HepG2 (cell line): ENCODE measurements at regions of chr20 and their contacts with region 1.

Region 1: DNA sequence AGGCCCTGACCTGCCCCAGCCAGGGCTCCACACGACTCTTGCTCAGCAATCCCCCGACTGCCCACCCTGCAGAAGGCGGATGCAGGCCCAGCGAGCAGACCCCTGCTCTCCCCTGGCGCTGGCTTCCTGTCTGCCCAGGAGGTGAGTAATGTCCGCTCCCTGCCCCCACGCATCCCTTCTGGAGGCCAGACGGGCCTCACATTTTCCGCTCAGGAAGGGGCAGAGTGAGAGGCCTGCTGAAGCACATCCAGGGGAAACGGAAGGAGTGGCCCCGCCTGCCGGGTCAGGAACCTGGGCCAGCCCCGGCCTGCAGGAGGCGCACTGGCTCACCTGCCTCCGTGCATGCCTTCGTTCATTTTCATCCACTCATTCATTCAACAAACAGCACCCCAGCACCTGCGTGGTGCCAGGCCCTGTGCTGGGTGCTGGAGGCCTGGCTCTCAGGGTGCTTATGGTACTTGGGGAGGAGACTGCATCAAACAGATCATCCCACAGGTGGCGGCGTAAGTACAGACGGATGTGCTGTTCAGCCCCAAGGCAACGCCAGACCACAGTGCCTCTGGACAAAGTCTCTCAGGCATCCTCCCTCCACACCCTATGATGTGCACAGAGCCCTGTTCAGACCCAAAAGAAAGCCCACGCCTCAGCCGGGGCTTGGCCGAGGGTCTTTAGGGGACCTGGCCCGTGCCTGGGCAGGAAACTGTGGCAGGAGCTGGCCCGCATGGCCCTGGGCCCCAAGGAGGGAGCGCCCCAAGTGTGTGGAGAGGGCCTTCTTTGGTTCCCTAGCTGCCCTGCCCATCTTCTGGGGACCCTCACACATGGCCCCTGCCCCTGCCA is 112.1 kb downstream of the ASXL1 start:
- DNase-seq: peak; percentile 71
- ATAC-seq: peak; percentile 14
- H3K4me3 ChIP-seq: no peak overlapping the region
- H3K27ac ChIP-seq: peak overlapping the region; percentile 7
- H3K4me1 ChIP-seq: peaks cover 87% of the 10 kb centered on the region
- H3K27me3 ChIP-seq: no peaks in the 10 kb centered on the region
- CTCF ChIP-seq: peak; percentile 72
- EP300 ChIP-seq: no peak
- POLR2A ChIP-seq: peak; percentile 35 to 38; a peak in 3 of 4 replicates
- RAD21 ChIP-seq: peak; percentile 92

Region 2: GRCh38 chr20:32411955-32412706 is 58.1 kb before region 1 on chr20:
- CTCF ChIA-PET with region 1: no interaction called
- POLR2A ChIA-PET with region 1: no interaction called
- in situ Hi-C with region 1: no loop called
- intact Hi-C with region 1: no loop called
- DNase-seq: no peak
- ATAC-seq: no peak
- H3K4me3 ChIP-seq: no peak overlapping the region
- H3K27ac ChIP-seq: no peak overlapping the region
- H3K4me1 ChIP-seq: no peaks in the 10 kb centered on the region
- H3K27me3 ChIP-seq: no peaks in the 10 kb centered on the region
- CTCF ChIP-seq: no peak
- EP300 ChIP-seq: no peak
- POLR2A ChIP-seq: no peak
- RAD21 ChIP-seq: no peak

Region 3: GRCh38 chr20:32427996-32428395 is 42.2 kb before region 1 on chr20:
- CTCF ChIA-PET with region 1: no interaction called
- POLR2A ChIA-PET with region 1: no interaction called
- in situ Hi-C with region 1: no loop called
- intact Hi-C with region 1: no loop called
- DNase-seq: no peak
- ATAC-seq: no peak
- H3K4me3 ChIP-seq: no peak overlapping the region
- H3K27ac ChIP-seq: no peak overlapping the region
- H3K4me1 ChIP-seq: peaks cover 9% of the 10 kb centered on the region
- H3K27me3 ChIP-seq: no peaks in the 10 kb centered on the region
- CTCF ChIP-seq: no peak
- EP300 ChIP-seq: no peak
- POLR2A ChIP-seq: no peak
- RAD21 ChIP-seq: no peak

Region 4: GRCh38 chr20:32484958-32485769 is 14.9 kb after region 1 on chr20:
- CTCF ChIA-PET with region 1: interaction called, 13 read pairs
- POLR2A ChIA-PET with region 1: interaction called, 81 read pairs
- in situ Hi-C with region 1: no loop called
- intact Hi-C with region 1: loop called (anchors 1 kb)
- DNase-seq: peak; percentile 87
- ATAC-seq: peak; percentile 52
- H3K4me3 ChIP-seq: peak overlapping the region; percentile 74 to 90 (median 83)
- H3K27ac ChIP-seq: peak overlapping the region; percentile 76
- H3K4me1 ChIP-seq: peaks cover 42% of the 10 kb centered on the region
- H3K27me3 ChIP-seq: no peaks in the 10 kb centered on the region
- CTCF ChIP-seq: peak; percentile 87
- EP300 ChIP-seq: peak in 1 of 2 experiments; percentile 54; a peak in 2 of 4 replicates
- POLR2A ChIP-seq: no peak
- RAD21 ChIP-seq: peak; percentile 73

Region 5: GRCh38 chr20:32509639-32510066 is 39.4 kb after region 1 on chr20:
- CTCF ChIA-PET with region 1: interaction called, 5 read pairs
- POLR2A ChIA-PET with region 1: interaction called, 3 read pairs
- in situ Hi-C with region 1: loop called (anchors 5 kb)
- intact Hi-C with region 1: loop called (anchors 1 kb)
- DNase-seq: peak; percentile 91
- ATAC-seq: peak; percentile 82
- H3K4me3 ChIP-seq: peak overlapping the region in 1 of 3 experiments; percentile 21; a peak in 1 of 6 replicates
- H3K27ac ChIP-seq: no peak overlapping the region
- H3K4me1 ChIP-seq: peaks cover 64% of the 10 kb centered on the region
- H3K27me3 ChIP-seq: no peaks in the 10 kb centered on the region
- CTCF ChIP-seq: peak; percentile 86
- EP300 ChIP-seq: no peak; a peak in 1 of 4 replicates
- POLR2A ChIP-seq: no peak
- RAD21 ChIP-seq: peak; percentile 69; the same call in 1 of the 2 replicates

Region 6: GRCh38 chr20:32535953-32536823 is 65.9 kb after region 1 on chr20:
- CTCF ChIA-PET with region 1: no interaction called
- POLR2A ChIA-PET with region 1: interaction called, 12 read pairs
- in situ Hi-C with region 1: no loop called
- intact Hi-C with region 1: no loop called
- DNase-seq: peak; percentile 79
- ATAC-seq: peak; percentile 47
- H3K4me3 ChIP-seq: peak overlapping the region; percentile 52 to 70 (median 64); a peak in 5 of 6 replicates
- H3K27ac ChIP-seq: peak overlapping the region; percentile 44
- H3K4me1 ChIP-seq: peaks cover 79% of the 10 kb centered on the region
- H3K27me3 ChIP-seq: no peaks in the 10 kb centered on the region
- CTCF ChIP-seq: no peak; the same call in 1 of the 2 replicates
- EP300 ChIP-seq: no peak
- POLR2A ChIP-seq: no peak
- RAD21 ChIP-seq: no peak; the same call in 1 of the 2 replicates

Region 7: GRCh38 chr20:32652739-32653526 is 182.7 kb after region 1 on chr20:
- CTCF ChIA-PET with region 1: no interaction called
- POLR2A ChIA-PET with region 1: no interaction called
- in situ Hi-C with region 1: loop called (anchors 5 kb)
- intact Hi-C with region 1: loop called (anchors 1 kb)
- DNase-seq: peak; percentile 89
- ATAC-seq: peak; percentile 98
- H3K4me3 ChIP-seq: peak overlapping the region in 1 of 3 experiments; percentile 45; a peak in 1 of 6 replicates
- H3K27ac ChIP-seq: no peak overlapping the region
- H3K4me1 ChIP-seq: peaks cover 18% of the 10 kb centered on the region
- H3K27me3 ChIP-seq: peaks cover 2 to 30% of the 10 kb centered on the region in 2 experiments; a peak in 4 of 5 replicates
- CTCF ChIP-seq: peak; percentile 100
- EP300 ChIP-seq: peak in 1 of 2 experiments; percentile 56; a peak in 2 of 4 replicates
- POLR2A ChIP-seq: no peak
- RAD21 ChIP-seq: peak; percentile 100